WTC11 (cell line): ENCODE measurements at regions of chr12 and their contacts with region 1.

Region 1: DNA sequence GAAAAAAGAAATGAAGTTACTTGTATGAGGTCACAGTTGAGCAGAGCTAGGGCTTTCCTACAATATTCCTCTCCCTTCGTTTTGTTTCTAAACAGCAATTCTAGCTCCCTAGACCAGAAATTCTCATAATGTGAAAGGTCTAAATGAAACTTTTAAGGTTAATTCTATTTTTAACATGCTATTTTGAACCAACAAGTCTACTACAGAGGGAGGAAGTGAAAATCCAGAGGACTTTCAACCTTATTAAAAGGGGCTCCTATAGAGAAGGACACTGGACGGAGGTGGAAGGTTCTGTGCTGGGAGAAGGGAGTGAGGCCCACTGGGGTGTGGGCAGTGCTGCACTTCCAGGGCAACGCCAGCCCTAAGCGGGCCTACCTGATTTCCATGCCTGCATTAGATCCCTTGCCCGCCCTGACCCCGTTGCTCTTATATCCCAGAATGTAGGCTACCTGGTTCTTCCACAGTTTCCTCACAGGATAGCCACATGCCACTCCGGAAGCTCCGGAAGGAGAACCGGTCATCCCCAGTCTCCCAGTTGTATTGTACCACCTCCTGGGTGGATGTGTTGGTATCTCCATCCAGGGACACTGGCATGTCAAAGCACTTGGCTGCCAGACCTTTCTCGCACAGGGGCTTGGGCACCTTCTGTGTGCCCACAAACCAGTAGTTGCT is 13.3 kb downstream of the GSG1 start:
- DNase-seq: no peak
- ATAC-seq: no peak
- H3K4me3 Mint-ChIP-seq: no peak overlapping the region
- H3K27ac Mint-ChIP-seq: no peak overlapping the region
- H3K4me1 Mint-ChIP-seq: peaks cover 71% of the 10 kb centered on the region
- H3K27me3 Mint-ChIP-seq: no peaks in the 10 kb centered on the region
- CTCF ChIP-seq: no peak

Region 2: GRCh38 chr12:13079440-13079906 is 10.7 kb before region 1 on chr12:
- CTCF ChIA-PET with region 1: interaction called, 40 read pairs
- POLR2A ChIA-PET with region 1: interaction called, 5 read pairs
- DNase-seq: no peak
- ATAC-seq: peak; percentile 95
- H3K4me3 Mint-ChIP-seq: no peak overlapping the region
- H3K27ac Mint-ChIP-seq: peak overlapping the region; percentile 70
- H3K4me1 Mint-ChIP-seq: peaks cover 13% of the 10 kb centered on the region
- H3K27me3 Mint-ChIP-seq: no peaks in the 10 kb centered on the region
- CTCF ChIP-seq: no peak

Region 3: GRCh38 chr12:13100882-13101769 is 10.9 kb after region 1 on chr12:
- CTCF ChIA-PET with region 1: interaction called, 11 read pairs
- POLR2A ChIA-PET with region 1: interaction called, 3 read pairs
- DNase-seq: peak; percentile 87
- ATAC-seq: peak; percentile 83
- H3K4me3 Mint-ChIP-seq: peak overlapping the region; percentile 74
- H3K27ac Mint-ChIP-seq: peak overlapping the region; percentile 36
- H3K4me1 Mint-ChIP-seq: peaks cover 46% of the 10 kb centered on the region
- H3K27me3 Mint-ChIP-seq: peaks cover 3% of the 10 kb centered on the region
- CTCF ChIP-seq: no peak

Region 4: GRCh38 chr12:13114251-13115052 is 24.3 kb after region 1 on chr12:
- CTCF ChIA-PET with region 1: no interaction called
- POLR2A ChIA-PET with region 1: no interaction called
- DNase-seq: peak; percentile 38
- ATAC-seq: peak; percentile 85
- H3K4me3 Mint-ChIP-seq: no peak overlapping the region
- H3K27ac Mint-ChIP-seq: no peak overlapping the region; the same call in 1 of the 2 replicates
- H3K4me1 Mint-ChIP-seq: peaks cover 31% of the 10 kb centered on the region
- H3K27me3 Mint-ChIP-seq: no peaks in the 10 kb centered on the region
- CTCF ChIP-seq: no peak

Region 5: GRCh38 chr12:13233830-13234641 is 143.8 kb after region 1 on chr12:
- CTCF ChIA-PET with region 1: interaction called, 10 read pairs
- POLR2A ChIA-PET with region 1: no interaction called
- DNase-seq: peak; percentile 55
- ATAC-seq: peak; percentile 81
- H3K4me3 Mint-ChIP-seq: no peak overlapping the region
- H3K27ac Mint-ChIP-seq: no peak overlapping the region
- H3K4me1 Mint-ChIP-seq: peaks cover 4% of the 10 kb centered on the region
- H3K27me3 Mint-ChIP-seq: peaks cover 2% of the 10 kb centered on the region; the same call in 1 of the 2 replicates
- CTCF ChIP-seq: peak; percentile 59